ENCODE measurements at regions of chr14 and their contacts with region 1.

Region 1: DNA sequence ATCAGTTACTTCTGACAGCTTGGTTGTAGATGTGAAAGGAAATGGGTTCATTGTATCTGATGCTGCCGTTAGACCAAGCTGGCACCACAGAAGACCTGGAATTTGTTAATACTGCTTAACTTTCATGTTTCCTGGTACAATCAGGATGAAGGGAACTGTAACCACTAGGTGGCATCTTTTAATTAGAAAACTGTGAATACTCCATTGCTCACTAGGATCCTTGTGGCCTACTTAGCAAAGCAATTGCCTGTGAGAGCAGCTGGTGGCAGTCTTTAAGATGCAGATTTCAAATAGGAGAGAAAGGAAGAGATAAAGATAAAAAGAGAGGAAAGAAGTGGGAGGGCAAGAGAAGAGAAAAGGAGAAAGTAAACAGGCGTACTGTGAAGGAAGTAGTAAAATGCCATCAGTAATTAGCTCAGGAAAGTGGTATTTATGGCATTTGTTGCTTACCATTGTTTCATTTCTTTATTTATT is 114.5 kb downstream of the RAD51B start:
- DNase-seq: peak; percentile 28
- ATAC-seq: peak; percentile 91
- H3K4me3 Mint-ChIP-seq: peak overlapping the region; percentile 16
- H3K27ac Mint-ChIP-seq: peak overlapping the region; percentile 90
- H3K4me1 Mint-ChIP-seq: peaks cover 78% of the 10 kb centered on the region
- H3K27me3 Mint-ChIP-seq: no peaks in the 10 kb centered on the region
- CTCF ChIP-seq: no peak

Region 2: GRCh38 chr14:67749341-67750084 is 184.5 kb before region 1 on chr14:
- CTCF ChIA-PET with region 1: no interaction called
- POLR2A ChIA-PET with region 1: no interaction called
- DNase-seq: no peak
- ATAC-seq: no peak
- H3K4me3 Mint-ChIP-seq: no peak overlapping the region
- H3K27ac Mint-ChIP-seq: no peak overlapping the region
- H3K4me1 Mint-ChIP-seq: no peaks in the 10 kb centered on the region
- H3K27me3 Mint-ChIP-seq: no peaks in the 10 kb centered on the region
- CTCF ChIP-seq: no peak

Region 3: DNA sequence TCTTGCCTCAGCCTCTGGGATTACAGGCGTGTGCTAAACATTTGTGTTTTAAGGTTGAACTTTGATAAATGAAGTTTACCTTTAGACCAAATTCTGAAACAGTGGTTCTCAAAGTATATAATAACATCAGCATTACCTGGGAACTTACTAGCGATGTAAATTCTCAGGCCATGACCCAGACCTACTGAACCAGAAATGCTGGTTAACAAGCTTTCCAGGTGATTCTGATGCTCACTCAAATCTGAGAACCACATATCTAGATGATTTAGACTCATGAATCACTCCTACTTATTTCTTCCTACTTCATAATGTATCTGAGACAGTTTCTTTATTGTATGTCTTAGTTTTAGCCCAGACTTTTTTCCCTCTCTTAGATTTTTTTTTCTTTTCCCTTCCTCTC is 70.8 kb before region 1 on chr14:
- CTCF ChIA-PET with region 1: no interaction called
- POLR2A ChIA-PET with region 1: no interaction called
- DNase-seq: no peak
- ATAC-seq: no peak
- H3K4me3 Mint-ChIP-seq: no peak overlapping the region
- H3K27ac Mint-ChIP-seq: no peak overlapping the region
- H3K4me1 Mint-ChIP-seq: peaks cover 29% of the 10 kb centered on the region
- H3K27me3 Mint-ChIP-seq: no peaks in the 10 kb centered on the region; the same call in 1 of the 2 replicates
- CTCF ChIP-seq: no peak

Region 4: GRCh38 chr14:67883717-67884116 is 50.3 kb before region 1 on chr14:
- CTCF ChIA-PET with region 1: interaction called, 11 read pairs
- POLR2A ChIA-PET with region 1: no interaction called
- DNase-seq: no peak
- ATAC-seq: no peak
- H3K4me3 Mint-ChIP-seq: no peak overlapping the region
- H3K27ac Mint-ChIP-seq: no peak overlapping the region
- H3K4me1 Mint-ChIP-seq: peaks cover 13% of the 10 kb centered on the region
- H3K27me3 Mint-ChIP-seq: no peaks in the 10 kb centered on the region
- CTCF ChIP-seq: no peak

Region 5: DNA sequence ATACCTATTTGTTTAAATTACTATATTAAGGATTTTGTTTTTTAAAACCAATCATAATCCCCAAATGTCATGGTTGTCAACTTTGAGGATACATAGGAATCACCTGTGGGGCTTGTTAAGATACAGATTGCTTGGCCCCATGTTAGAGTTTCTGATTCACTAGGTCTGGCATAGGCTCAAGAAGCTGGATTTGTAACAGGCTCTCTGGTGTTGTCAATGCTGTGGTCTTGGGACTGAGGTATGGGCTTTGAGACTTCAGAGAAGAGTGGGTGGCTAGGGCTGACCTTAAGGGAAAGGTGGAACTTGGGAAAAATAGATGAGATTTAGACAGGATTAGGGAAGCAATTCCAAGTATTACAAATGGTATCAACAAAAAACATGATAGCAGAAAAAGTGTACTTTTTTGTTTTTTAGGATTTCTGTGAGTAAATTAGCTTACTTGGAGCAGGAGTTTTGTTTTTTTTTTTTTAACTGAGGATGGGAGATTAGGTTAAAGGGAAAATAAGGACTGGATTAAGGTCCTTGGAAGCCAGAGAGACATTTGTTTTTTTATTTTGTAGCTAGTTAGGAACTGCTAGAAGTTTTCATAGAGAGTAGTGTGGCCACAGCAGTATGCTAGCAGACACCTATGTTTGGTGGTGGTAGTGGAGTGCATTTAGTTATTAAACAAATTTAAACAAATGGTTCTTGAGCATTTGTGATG is 25.8 kb before region 1 on chr14:
- CTCF ChIA-PET with region 1: no interaction called
- POLR2A ChIA-PET with region 1: no interaction called
- DNase-seq: no peak
- ATAC-seq: 0 out of 2 replicates have a peak, but pooled peaks have one; percentile 38
- H3K4me3 Mint-ChIP-seq: no peak overlapping the region
- H3K27ac Mint-ChIP-seq: no peak overlapping the region
- H3K4me1 Mint-ChIP-seq: peaks cover 3% of the 10 kb centered on the region; the same call in 1 of the 2 replicates
- H3K27me3 Mint-ChIP-seq: no peaks in the 10 kb centered on the region
- CTCF ChIP-seq: no peak